ENCODE measurements at regions of chr1 and their contacts with region 1.

Region 1: DNA sequence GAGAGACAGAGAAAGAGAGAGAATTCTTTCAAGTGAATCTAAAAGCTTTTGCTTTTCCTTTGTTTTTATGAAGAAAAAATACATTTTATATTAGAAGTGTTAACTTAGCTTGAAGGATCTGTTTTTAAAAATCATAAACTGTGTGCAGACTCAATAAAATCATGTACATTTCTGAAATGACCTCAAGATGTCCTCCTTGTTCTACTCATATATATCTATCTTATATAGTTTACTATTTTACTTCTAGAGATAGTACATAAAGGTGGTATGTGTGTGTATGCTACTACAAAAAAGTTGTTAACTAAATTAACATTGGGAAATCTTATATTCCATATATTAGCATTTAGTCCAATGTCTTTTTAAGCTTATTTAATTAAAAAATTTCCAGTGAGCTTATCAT is 117.6 kb downstream of the PTPRC start:
- DNase-seq: no peak
- ATAC-seq: peak; percentile 41
- H3K4me3 ChIP-seq: no peak overlapping the region
- H3K4me3 Mint-ChIP-seq: no peak overlapping the region
- H3K27ac ChIP-seq: no peak overlapping the region
- H3K27ac Mint-ChIP-seq: peak overlapping the region in 4 of 9 donors; percentile 10 to 81 (median 34)
- H3K4me1 ChIP-seq: no peaks in the 10 kb centered on the region
- H3K4me1 Mint-ChIP-seq: peaks cover 5 to 36% (median 21%) of the 10 kb centered on the region in 7 donors
- H3K27me3 ChIP-seq: no peaks in the 10 kb centered on the region
- H3K27me3 Mint-ChIP-seq: no peaks in the 10 kb centered on the region

Region 2: DNA sequence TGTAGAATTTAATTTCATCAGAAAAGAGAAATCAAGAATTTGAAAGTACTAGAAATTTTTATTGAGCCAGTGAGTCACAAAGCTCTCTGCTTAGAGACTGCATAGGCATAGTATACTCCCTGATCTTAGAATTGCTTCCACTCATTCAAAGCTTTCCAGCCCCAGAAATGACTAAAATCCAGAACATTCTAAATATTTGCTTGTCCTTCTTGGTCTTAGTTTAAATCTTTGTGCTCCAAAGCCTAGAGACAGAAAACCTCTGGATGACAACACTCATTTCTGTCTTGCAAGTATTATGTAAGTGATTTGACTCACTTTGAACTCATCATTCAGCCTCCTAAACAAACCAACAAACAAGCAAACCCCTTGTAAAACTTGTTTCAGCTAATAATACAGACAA is 43.4 kb before region 1 on chr1:
- CTCF ChIA-PET with region 1: no interaction called
- POLR2A ChIA-PET with region 1: no interaction called
- intact Hi-C with region 1: loop called in 1 of 2 experiments (anchors 5 kb)
- DNase-seq: no peak
- ATAC-seq: peak; percentile 10
- H3K4me3 ChIP-seq: no peak overlapping the region
- H3K4me3 Mint-ChIP-seq: no peak overlapping the region
- H3K27ac ChIP-seq: peak overlapping the region; percentile 15
- H3K27ac Mint-ChIP-seq: peak overlapping the region in 8 of 9 donors; percentile 48 to 90 (median 70)
- H3K4me1 ChIP-seq: peaks cover 6 to 20% of the 10 kb centered on the region in 2 donors
- H3K4me1 Mint-ChIP-seq: peaks cover 20 to 78% (median 63%) of the 10 kb centered on the region in 7 donors
- H3K27me3 ChIP-seq: no peaks in the 10 kb centered on the region
- H3K27me3 Mint-ChIP-seq: no peaks in the 10 kb centered on the region

Region 3: GRCh38 chr1:198726455-198726854 is 30.0 kb before region 1 on chr1:
- CTCF ChIA-PET with region 1: no interaction called
- POLR2A ChIA-PET with region 1: no interaction called
- intact Hi-C with region 1: loop called in 1 of 2 experiments (anchors 5 kb)
- DNase-seq: no peak
- ATAC-seq: no peak
- H3K4me3 ChIP-seq: no peak overlapping the region
- H3K4me3 Mint-ChIP-seq: peak overlapping the region in 1 of 10 donors; percentile 14
- H3K27ac ChIP-seq: no peak overlapping the region
- H3K27ac Mint-ChIP-seq: peak overlapping the region in 8 of 9 donors; percentile 59 to 89 (median 82)
- H3K4me1 ChIP-seq: peaks cover 28 to 32% of the 10 kb centered on the region in 2 donors
- H3K4me1 Mint-ChIP-seq: peaks cover 26 to 84% (median 69%) of the 10 kb centered on the region in 7 donors
- H3K27me3 ChIP-seq: no peaks in the 10 kb centered on the region
- H3K27me3 Mint-ChIP-seq: no peaks in the 10 kb centered on the region

Region 4: DNA sequence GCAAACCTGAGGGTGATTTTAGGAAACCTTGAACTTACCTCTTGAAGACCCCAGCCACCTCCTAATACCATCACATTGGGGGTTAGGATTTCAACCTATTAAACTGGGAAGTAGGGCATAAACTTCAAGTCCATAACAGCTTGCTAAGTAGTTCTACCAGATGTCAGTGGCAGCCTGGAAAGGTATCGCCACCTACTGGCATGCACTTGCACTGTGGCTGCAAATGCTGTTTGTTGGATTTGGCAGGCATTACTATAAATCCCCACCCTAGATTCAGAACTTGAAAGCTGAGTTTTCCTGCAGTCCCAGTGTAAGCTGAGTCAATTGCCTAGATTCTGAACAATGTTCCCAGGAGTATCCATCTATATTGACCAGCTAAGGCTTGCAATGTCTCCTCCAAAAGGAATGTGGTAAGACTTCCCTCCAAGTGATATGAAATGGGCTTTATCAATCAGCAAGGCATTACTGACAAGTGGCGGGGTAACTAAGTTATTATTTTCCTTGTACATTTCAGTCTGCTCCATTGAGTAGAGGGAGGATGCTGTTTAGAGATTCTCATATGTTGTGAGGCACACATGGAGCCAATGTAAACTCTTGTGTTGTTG is 356.9 kb after region 1 on chr1:
- CTCF ChIA-PET with region 1: interaction called, 14 read pairs
- POLR2A ChIA-PET with region 1: no interaction called
- intact Hi-C with region 1: loop called in 1 of 2 experiments (anchors 1 kb)
- DNase-seq: peak; percentile 26 to 64 (median 44)
- ATAC-seq: peak; percentile 80
- H3K4me3 ChIP-seq: no peak overlapping the region
- H3K4me3 Mint-ChIP-seq: peak overlapping the region in 1 of 10 donors; percentile 7
- H3K27ac ChIP-seq: no peak overlapping the region
- H3K27ac Mint-ChIP-seq: peak overlapping the region in 1 of 9 donors; percentile 4
- H3K4me1 ChIP-seq: no peaks in the 10 kb centered on the region
- H3K4me1 Mint-ChIP-seq: peaks cover 0 to 22% (median 0%) of the 10 kb centered on the region in 7 donors
- H3K27me3 ChIP-seq: no peaks in the 10 kb centered on the region
- H3K27me3 Mint-ChIP-seq: no peaks in the 10 kb centered on the region

Region 5: GRCh38 chr1:199551967-199552565 is 795.6 kb after region 1 on chr1:
- CTCF ChIA-PET with region 1: no interaction called
- POLR2A ChIA-PET with region 1: no interaction called
- intact Hi-C with region 1: loop called in 1 of 2 experiments (anchors 5 kb)
- DNase-seq: peak in 4 of 9 donors; percentile 11 to 34 (median 20)
- ATAC-seq: no peak
- H3K4me3 ChIP-seq: no peak overlapping the region
- H3K4me3 Mint-ChIP-seq: no peak overlapping the region
- H3K27ac ChIP-seq: no peak overlapping the region
- H3K27ac Mint-ChIP-seq: no peak overlapping the region
- H3K4me1 ChIP-seq: no peaks in the 10 kb centered on the region
- H3K4me1 Mint-ChIP-seq: peaks cover 0 to 1% (median 0%) of the 10 kb centered on the region in 7 donors
- H3K27me3 ChIP-seq: no peaks in the 10 kb centered on the region
- H3K27me3 Mint-ChIP-seq: peaks cover 9 to 22% (median 15%) of the 10 kb centered on the region in 5 donors

Measured in naive thymus-derived CD4-positive, alpha-beta T cell (primary cell).